Heart right ventricle (tissue), 16 donors: ENCODE measurements at regions of chr18 and their contacts with region 1.

Region 1: DNA sequence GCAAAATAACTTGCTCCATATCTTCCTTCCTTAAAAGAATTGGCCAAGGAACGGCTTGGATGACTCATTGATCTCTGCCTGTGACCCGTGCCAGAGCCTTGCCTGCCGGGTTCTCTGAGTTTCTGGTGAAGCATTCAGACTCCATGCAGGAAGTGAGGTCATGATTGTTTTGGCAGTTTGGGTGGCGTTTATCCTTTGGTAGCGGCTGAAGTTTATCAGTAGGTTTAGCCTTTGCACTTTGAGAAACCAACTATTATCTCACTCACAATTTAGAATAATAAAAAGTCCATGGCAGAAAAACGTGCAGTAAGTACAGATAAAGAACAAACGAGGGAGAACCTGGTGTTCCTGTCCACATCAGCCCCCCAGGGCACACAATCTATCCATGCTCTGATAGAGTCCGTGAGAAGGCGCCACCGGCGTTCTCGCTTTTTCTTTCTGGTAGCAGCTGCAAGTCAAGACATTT is 15.0 kb upstream of the CTAGE1 start:
- DNase-seq: peak; percentile 71 to 80
- ATAC-seq: peak; percentile 75 to 94 (median 90)
- H3K4me3 ChIP-seq: peak overlapping the region in 2 of 10 donors; percentile 24 to 30
- H3K27ac ChIP-seq: peak overlapping the region in 8 of 10 donors; percentile 43 to 72 (median 60)
- H3K4me1 ChIP-seq: peaks cover 0 to 26% (median 16%) of the 10 kb centered on the region in 9 donors
- H3K27me3 ChIP-seq: no peaks in the 10 kb centered on the region
- CTCF ChIP-seq: no peak

Region 2: DNA sequence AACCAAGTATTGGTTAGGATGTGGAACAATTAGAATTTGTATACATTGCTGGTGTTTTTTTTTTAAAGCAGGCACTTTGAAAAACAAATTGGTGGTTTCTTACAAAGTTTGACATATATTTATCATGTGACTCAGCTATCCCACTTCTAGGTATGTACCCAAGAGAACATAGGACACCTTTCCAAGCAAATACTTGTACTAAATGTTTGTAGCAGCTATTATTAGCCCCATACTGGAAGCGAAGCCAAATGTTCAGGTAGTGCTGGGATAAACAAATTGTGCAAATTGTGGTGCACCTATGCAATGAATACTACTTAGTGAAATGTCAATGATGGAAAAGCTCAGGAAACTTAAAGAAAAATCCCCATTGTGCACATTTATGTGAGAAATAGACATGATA is 591.1 kb before region 1 on chr18:
- intact Hi-C with region 1: no loop called
- DNase-seq: no peak
- ATAC-seq: no peak
- H3K4me3 ChIP-seq: no peak overlapping the region
- H3K27ac ChIP-seq: no peak overlapping the region
- H3K4me1 ChIP-seq: no peaks in the 10 kb centered on the region
- H3K27me3 ChIP-seq: no peaks in the 10 kb centered on the region
- CTCF ChIP-seq: no peak

Region 3: GRCh38 chr18:22152134-22152533 is 280.6 kb before region 1 on chr18:
- intact Hi-C with region 1: no loop called
- DNase-seq: no peak
- ATAC-seq: peak in 1 of 8 donors; percentile 31
- H3K4me3 ChIP-seq: no peak overlapping the region
- H3K27ac ChIP-seq: no peak overlapping the region
- H3K4me1 ChIP-seq: no peaks in the 10 kb centered on the region
- H3K27me3 ChIP-seq: no peaks in the 10 kb centered on the region
- CTCF ChIP-seq: no peak

Region 4: GRCh38 chr18:22378672-22379282 is 53.9 kb before region 1 on chr18:
- intact Hi-C with region 1: loop called in 2 of 10 experiments (anchors 10 kb)
- DNase-seq: peak; percentile 14 to 27
- ATAC-seq: peak in 7 of 8 donors; percentile 64 to 87 (median 72)
- H3K4me3 ChIP-seq: no peak overlapping the region
- H3K27ac ChIP-seq: no peak overlapping the region
- H3K4me1 ChIP-seq: no peaks in the 10 kb centered on the region
- H3K27me3 ChIP-seq: no peaks in the 10 kb centered on the region
- CTCF ChIP-seq: peak; percentile 15 to 66 (median 56)

Region 5: GRCh38 chr18:22385718-22386117 is 47.0 kb before region 1 on chr18:
- intact Hi-C with region 1: loop called in 1 of 10 experiments (anchors 10 kb)
- DNase-seq: no peak
- ATAC-seq: no peak
- H3K4me3 ChIP-seq: no peak overlapping the region
- H3K27ac ChIP-seq: peak overlapping the region in 1 of 10 donors; percentile 8
- H3K4me1 ChIP-seq: peaks cover 0 to 11% (median 0%) of the 10 kb centered on the region in 9 donors
- H3K27me3 ChIP-seq: no peaks in the 10 kb centered on the region
- CTCF ChIP-seq: no peak

Region 6: DNA sequence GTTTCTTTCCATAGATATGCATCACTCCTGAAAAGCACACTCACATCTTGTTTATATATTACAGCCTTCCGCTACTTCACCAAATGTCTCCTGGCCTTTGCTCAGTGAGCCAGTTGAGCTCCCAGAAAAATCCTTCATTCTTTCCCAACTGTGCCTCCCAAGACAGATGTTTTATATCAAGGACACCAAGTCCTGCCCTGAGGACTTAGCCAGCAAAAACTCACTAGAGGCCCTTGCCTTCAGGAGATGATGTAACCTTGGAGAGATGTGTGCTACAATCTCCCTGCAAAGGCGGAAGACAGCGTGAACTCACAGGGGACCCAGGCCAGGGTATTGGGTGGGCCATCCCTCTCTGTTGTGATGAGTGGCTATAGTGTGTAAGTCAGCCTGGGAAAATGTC is 71.1 kb after region 1 on chr18:
- intact Hi-C with region 1: loop called in 1 of 10 experiments (anchors 10 kb)
- DNase-seq: peak; percentile 48 to 57
- ATAC-seq: peak; percentile 89 to 95 (median 92)
- H3K4me3 ChIP-seq: no peak overlapping the region
- H3K27ac ChIP-seq: peak overlapping the region in 9 of 10 donors; percentile 35 to 71 (median 56)
- H3K4me1 ChIP-seq: peaks cover 0 to 25% (median 11%) of the 10 kb centered on the region in 9 donors
- H3K27me3 ChIP-seq: no peaks in the 10 kb centered on the region
- CTCF ChIP-seq: no peak

Region 7: GRCh38 chr18:22517356-22517755 is 84.7 kb after region 1 on chr18:
- intact Hi-C with region 1: no loop called
- DNase-seq: no peak
- ATAC-seq: peak in 6 of 8 donors; percentile 34 to 92 (median 66)
- H3K4me3 ChIP-seq: no peak overlapping the region
- H3K27ac ChIP-seq: peak overlapping the region in 2 of 10 donors; percentile 34 to 46
- H3K4me1 ChIP-seq: peaks cover 0 to 25% (median 18%) of the 10 kb centered on the region in 9 donors
- H3K27me3 ChIP-seq: no peaks in the 10 kb centered on the region
- CTCF ChIP-seq: no peak

Region 8: GRCh38 chr18:22572341-22572740 is 139.6 kb after region 1 on chr18:
- intact Hi-C with region 1: no loop called
- DNase-seq: no peak
- ATAC-seq: no peak
- H3K4me3 ChIP-seq: no peak overlapping the region
- H3K27ac ChIP-seq: no peak overlapping the region
- H3K4me1 ChIP-seq: peaks cover 0 to 1% (median 0%) of the 10 kb centered on the region in 9 donors
- H3K27me3 ChIP-seq: no peaks in the 10 kb centered on the region
- CTCF ChIP-seq: no peak